AG04449 (cell line): ENCODE measurements at regions of chr19 and their contacts with region 1.

Region 1: DNA sequence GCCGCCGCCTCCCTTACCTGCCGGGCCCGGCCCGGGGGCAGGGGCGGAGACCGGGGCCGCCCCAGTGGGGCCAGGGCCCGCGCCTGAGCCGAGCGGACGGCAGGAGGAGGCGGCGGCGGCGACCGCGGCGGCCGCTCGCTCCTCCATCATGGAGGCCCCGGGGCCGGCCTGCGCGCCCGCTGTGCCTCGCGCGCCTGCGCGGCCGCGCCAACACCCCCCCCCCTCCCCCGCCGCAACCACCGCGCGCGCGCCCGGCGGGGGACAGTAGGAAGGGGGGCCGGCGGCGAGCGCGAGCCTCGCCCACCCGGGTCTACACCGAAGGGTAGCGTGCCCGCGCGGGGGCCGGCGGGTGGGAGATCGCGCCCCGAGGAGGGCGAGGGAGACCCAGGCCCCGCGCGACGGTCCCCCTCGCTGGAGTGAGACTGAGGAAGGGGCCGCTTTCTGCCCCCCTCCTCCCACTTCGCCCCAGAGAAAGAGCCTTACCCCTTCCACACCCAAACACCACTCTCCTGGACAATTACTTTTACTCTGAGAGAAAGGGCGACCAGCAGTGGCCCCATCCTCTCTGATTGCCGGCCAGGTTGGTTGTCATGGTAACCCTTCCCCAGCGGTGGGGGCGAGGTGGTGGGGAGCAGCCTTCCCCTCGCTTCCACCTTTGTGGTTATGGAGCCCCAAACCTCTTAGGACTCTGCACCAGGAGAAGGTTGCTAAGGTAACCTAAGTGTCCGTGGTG is at the start of gene STRN4:
- DNase-seq: no peak
- H3K4me3 ChIP-seq: peak within 1 kb of the TSS; percentile 91
- CTCF ChIP-seq: no peak

Region 2: GRCh38 chr19:46759817-46760333 is 13.4 kb after region 1 on chr19:
- CTCF ChIA-PET with region 1: interaction called, 25 read pairs
- POLR2A ChIA-PET with region 1: no interaction called
- DNase-seq: peak; percentile 97
- H3K4me3 ChIP-seq: no peak overlapping the region
- CTCF ChIP-seq: no peak